Ascending aorta (tissue), 2 donors: ENCODE measurements at regions of chr18 and their contacts with region 1.

Region 1: GRCh38 chr18:24118750-24119577 is 19.9 kb upstream of the CABYR start:
- DNase-seq: peak in 1 of 2 donors; percentile 82
- H3K4me3 ChIP-seq: no peak overlapping the region
- H3K27ac ChIP-seq: no peak overlapping the region
- H3K4me1 ChIP-seq: no peaks in the 10 kb centered on the region
- H3K27me3 ChIP-seq: no peaks in the 10 kb centered on the region
- CTCF ChIP-seq: peak; percentile 75 to 91 (median 87)

Region 2: DNA sequence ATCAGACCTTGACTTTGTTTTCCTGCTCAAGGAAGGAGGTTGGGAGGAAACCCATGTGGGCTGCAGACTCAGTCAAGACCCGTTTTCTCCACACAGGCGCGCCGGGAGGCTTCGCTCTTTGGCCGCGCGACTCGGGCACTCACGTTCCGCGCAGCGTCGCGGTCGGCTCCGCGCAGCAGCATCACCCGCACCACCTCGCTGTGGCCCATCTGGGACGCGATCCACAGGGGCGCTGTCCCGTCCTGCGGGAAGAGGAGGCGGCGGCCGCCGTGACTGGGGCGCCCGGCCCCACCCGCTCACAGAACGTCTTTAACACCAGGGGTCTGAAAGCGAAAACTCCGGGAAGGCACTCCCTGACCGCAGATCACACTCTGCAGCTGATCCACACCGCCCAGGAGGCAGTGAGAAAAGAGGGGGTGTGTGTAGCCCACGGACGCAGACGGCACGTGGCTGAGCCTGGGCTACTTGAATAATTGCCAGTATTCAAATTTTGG is 499.5 kb before region 1 on chr18:
- intact Hi-C with region 1: loop called (anchors 2 kb)
- DNase-seq: no peak
- H3K4me3 ChIP-seq: peak overlapping the region; percentile 55 to 72
- H3K27ac ChIP-seq: peak overlapping the region in 1 of 2 donors; percentile 21
- H3K4me1 ChIP-seq: peaks cover 0 to 4% of the 10 kb centered on the region in 2 donors
- H3K27me3 ChIP-seq: no peaks in the 10 kb centered on the region
- CTCF ChIP-seq: peak in 1 of 3 experiments; percentile 5

Region 3: GRCh38 chr18:24014062-24014985 is 104.6 kb before region 1 on chr18 and contains the start of gene TTC39C:
- intact Hi-C with region 1: loop called (anchors 5 kb)
- DNase-seq: peak in 1 of 2 donors; percentile 86
- H3K4me3 ChIP-seq: peak within 1 kb of the TSS; percentile 91 to 96
- H3K27ac ChIP-seq: peak within 1 kb of the TSS; percentile 76 to 85
- H3K4me1 ChIP-seq: peaks cover 4 to 8% of the 10 kb centered on the region in 2 donors
- H3K27me3 ChIP-seq: no peaks in the 10 kb centered on the region
- CTCF ChIP-seq: no peak
- total RNA-seq, gene TTC39C: 18.2 TPM